ENCODE measurements at regions of chr1 and their contacts with region 1.

Region 1: GRCh38 chr1:156435545-156436141 is 64.9 kb downstream of the MEF2D start:
- DNase-seq: no peak
- H3K4me3 ChIP-seq: peak overlapping the region; percentile 27 to 75 (median 62)
- H3K27ac ChIP-seq: peak overlapping the region in 57 of 59 donors; percentile 9 to 100 (median 88)
- H3K27me3 ChIP-seq: peaks cover 0 to 57% (median 6%) of the 10 kb centered on the region in 45 donors
- CTCF ChIP-seq: peak in 1 of 56 donors; percentile 12

Region 2: DNA sequence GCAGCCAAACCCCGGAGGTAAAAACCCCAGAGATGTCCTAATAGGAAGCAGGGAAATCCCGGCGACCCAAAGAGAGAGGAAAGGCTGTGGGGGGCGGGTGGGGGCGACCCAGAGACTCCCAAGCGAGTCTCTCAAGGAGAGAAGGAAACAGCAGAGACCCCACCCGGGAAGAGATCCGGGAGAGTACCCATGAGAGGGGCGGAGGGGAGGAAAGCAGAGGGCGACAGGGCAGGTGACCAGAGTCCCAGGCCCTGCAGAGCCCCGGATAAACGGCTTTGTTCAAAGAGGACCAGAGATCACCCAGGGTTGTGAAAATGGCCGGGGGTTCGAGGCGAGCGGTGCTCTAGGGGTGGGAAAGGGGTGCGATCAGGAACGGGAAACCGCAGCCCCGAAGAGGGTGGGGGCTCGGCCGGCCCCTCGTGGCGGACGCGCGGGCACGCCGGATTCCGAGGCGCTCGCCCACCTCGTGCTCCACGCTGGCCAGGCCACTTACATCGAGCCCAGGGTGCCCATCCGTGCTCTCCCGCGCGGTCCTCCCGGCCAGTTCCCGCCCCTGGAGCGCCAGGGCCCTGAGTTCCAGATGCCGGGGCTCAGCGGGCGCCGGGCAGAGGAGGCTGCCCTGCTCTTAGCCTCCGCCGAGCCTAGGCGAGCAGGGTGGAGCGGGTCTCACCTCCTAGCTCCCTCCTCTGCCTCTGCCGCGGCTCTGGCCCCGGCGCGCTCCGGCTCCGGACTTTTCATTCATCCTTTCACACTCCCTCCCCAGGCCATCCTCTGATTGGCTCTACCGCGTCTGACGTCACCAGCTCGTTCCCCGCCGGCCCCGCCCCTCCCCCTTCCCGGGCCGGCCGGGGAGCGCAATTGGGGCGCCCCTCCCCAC is 14.3 kb before region 1 on chr1:
- intact Hi-C with region 1: loop called in 1 of 2 experiments (anchors 2 kb)
- DNase-seq: peak; percentile 85 to 96 (median 92)
- H3K4me3 ChIP-seq: peak overlapping the region; percentile 54 to 90 (median 74)
- H3K27ac ChIP-seq: peak overlapping the region in 57 of 59 donors; percentile 33 to 100 (median 89)
- H3K27me3 ChIP-seq: peaks cover 0 to 36% (median 0%) of the 10 kb centered on the region in 45 donors
- CTCF ChIP-seq: peak in 7 of 56 donors; percentile 9 to 25 (median 15)

Region 3: DNA sequence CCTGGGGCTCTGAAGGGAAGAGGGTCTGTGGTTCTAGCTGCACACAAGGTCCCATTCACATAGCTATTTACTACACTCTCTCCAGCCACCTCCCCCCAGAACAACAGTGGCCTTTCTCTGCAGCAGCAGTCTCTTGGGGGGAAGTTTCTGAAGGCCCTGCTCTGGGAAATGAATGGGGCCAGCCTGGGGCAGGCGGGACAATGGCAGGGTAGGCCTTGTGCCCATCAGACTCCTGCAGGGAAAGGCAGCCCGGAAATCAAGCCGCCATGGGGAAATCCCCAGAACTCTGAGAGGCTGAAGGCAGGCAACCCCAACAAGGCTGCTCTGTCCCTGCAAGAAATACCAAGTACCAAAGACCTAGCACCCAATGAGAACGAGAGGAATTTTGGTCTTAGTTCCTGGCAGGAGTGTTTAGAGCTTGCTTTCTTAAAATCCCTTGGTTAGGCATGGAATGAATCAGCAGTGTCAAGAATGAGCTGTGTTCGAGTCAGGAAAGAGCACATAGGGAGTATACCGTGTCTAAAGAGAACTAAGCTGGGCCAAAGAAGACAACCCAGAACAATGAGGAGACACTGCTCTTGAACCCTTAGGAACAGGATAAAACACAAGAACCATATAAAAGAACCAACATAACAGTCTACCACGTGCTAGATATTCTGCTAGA is 598.6 kb after region 1 on chr1:
- intact Hi-C with region 1: no loop called
- DNase-seq: peak in 9 of 10 donors; percentile 32 to 72 (median 54)
- H3K4me3 ChIP-seq: peak overlapping the region in 2 of 59 donors; percentile 2 to 9
- H3K27ac ChIP-seq: peak overlapping the region in 31 of 59 donors; percentile 2 to 72 (median 41)
- H3K27me3 ChIP-seq: no peaks in the 10 kb centered on the region
- CTCF ChIP-seq: peak in 2 of 56 donors; percentile 11 to 12